Activated CD4-positive, alpha-beta T cell treated with anti-CD3 and anti-CD28 coated beads for 36 hours (primary cell): ENCODE measurements at regions of chr11 and their contacts with region 1.

Region 1: DNA sequence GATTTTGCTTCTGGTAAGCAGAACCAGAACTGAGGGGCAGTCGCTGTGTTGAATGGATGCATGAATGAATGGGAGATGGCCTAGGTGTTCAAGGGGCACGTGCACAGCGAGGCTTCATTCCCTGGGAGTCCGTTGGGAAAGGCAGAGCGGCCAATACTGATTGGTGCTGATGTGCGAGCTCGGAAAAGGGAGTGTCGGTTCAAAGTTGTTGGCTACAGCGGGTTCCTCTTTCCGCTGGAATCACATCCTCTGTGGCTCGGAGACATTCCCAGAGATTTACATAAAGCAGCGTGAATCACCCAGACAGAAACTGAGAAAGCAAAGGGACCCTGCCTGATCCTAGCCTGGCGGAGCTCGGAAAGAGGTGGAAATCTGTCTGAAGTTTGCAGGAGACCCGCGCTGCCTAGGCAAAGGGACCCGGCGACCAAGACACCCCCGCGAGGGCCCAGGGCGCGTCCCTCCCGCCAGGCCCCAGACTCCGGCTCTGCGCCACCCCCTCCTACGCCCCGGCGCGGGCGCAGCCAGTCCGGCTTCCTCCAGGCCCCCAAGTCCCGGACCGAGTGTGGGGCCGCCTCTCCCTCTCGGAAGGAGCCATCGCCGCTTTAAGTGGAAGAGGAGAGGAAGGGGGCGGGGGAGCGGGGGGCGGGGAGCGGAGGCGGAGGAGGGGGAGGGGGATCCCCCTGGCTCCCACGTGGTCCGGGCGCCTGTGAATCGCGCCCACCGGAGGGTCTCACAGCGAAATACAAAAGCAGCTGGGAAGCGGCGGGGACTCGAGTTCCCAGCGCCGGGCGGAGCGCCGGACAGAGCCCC is at the start of gene FJX1:
- DNase-seq: peak; percentile 37
- ATAC-seq: peak; percentile 15
- H3K4me3 Mint-ChIP-seq: peak within 1 kb of the TSS; percentile 55
- H3K27ac Mint-ChIP-seq: no peak within 1 kb of the TSS
- H3K4me1 Mint-ChIP-seq: peaks cover 11% of the 10 kb centered on the region
- H3K27me3 Mint-ChIP-seq: peaks cover 51% of the 10 kb centered on the region
- total RNA-seq, gene FJX1: 0.69 to 0.74 TPM

Region 2: DNA sequence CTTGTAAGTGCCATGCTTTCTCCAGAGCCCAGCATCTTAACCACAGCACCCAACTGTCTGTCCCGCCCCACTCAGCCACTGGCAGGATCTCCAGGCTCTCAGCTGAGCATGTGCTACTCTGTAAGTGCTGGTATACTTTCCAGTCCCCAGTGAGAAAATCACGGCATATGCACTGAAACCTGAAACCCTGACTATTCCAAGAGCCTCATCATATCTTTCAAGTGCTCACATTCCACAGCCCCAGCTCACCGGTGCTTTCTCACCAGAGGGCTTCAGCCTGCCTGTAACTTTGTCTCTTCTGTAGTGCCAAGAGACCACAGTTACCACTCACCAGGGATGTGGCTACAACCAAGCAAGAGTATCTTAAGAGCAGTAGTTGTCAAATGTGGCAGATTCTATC is 68.1 kb before region 1 on chr11:
- CTCF ChIA-PET with region 1: no interaction called
- POLR2A ChIA-PET with region 1: no interaction called
- intact Hi-C with region 1: no loop called
- DNase-seq: no peak
- ATAC-seq: no peak
- H3K4me3 Mint-ChIP-seq: no peak overlapping the region
- H3K27ac Mint-ChIP-seq: no peak overlapping the region
- H3K4me1 Mint-ChIP-seq: no peaks in the 10 kb centered on the region
- H3K27me3 Mint-ChIP-seq: peaks cover 14% of the 10 kb centered on the region

Region 3: GRCh38 chr11:35662649-35663407 is 44.9 kb after region 1 on chr11 and contains the start of gene TRIM44:
- CTCF ChIA-PET with region 1: no interaction called
- POLR2A ChIA-PET with region 1: no interaction called
- intact Hi-C with region 1: loop called (anchors 1 to 2 kb)
- DNase-seq: peak; percentile 92
- ATAC-seq: peak; percentile 86
- H3K4me3 Mint-ChIP-seq: peak within 1 kb of the TSS; percentile 83
- H3K27ac Mint-ChIP-seq: peak within 1 kb of the TSS; percentile 97
- H3K4me1 Mint-ChIP-seq: peaks cover 41% of the 10 kb centered on the region
- H3K27me3 Mint-ChIP-seq: peaks cover under 1% of the 10 kb centered on the region
- total RNA-seq, gene TRIM44: 38.1 to 39.9 TPM

Region 4: GRCh38 chr11:35943713-35944655 is 326.1 kb after region 1 on chr11 and contains the start of gene LDLRAD3:
- CTCF ChIA-PET with region 1: no interaction called
- POLR2A ChIA-PET with region 1: no interaction called
- intact Hi-C with region 1: loop called in 1 of 2 experiments (anchors 5 kb)
- DNase-seq: peak; percentile 67
- ATAC-seq: peak; percentile 87
- H3K4me3 Mint-ChIP-seq: peak within 1 kb of the TSS; percentile 68
- H3K27ac Mint-ChIP-seq: no peak within 1 kb of the TSS
- H3K4me1 Mint-ChIP-seq: peaks cover 3% of the 10 kb centered on the region
- H3K27me3 Mint-ChIP-seq: peaks cover 46% of the 10 kb centered on the region
- total RNA-seq, gene LDLRAD3: 0.46 to 0.47 TPM

Region 5: GRCh38 chr11:36131721-36132397 is 514.0 kb after region 1 on chr11:
- CTCF ChIA-PET with region 1: no interaction called
- POLR2A ChIA-PET with region 1: no interaction called
- intact Hi-C with region 1: loop called in 1 of 2 experiments (anchors 1 kb)
- DNase-seq: peak; percentile 17
- ATAC-seq: no peak
- H3K4me3 Mint-ChIP-seq: no peak overlapping the region
- H3K27ac Mint-ChIP-seq: no peak overlapping the region
- H3K4me1 Mint-ChIP-seq: no peaks in the 10 kb centered on the region
- H3K27me3 Mint-ChIP-seq: peaks cover 8% of the 10 kb centered on the region

Region 6: DNA sequence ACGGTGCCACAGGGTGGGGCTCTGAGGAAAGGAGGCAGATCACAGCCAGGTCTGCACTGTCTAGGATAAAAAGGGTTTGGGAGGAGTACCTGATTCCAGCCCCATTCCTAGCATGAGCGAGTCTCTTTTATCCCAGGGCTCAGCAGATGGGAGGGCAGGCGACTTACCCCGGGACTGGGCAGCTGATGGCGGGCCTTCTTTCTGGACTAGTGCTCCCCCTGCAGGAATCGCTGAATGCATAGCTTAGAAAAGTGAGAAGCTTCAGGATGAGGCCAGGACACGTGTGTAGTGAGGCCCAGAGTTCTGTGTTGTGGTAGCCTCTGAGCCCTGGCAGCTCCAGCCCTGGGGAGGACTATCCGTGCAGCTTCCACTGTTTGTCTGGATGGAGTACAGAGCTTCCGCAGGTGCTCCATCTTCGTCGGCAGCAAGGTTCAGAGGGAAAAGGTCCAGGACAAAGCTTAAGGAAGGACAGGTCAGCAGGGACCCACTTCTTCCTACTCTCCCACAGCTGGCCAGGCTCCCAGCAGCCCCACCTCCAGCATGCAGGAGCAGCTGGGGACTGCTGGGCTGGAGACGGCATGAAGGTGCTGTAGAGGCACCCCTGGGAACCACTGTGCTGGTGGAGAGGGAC is 641.0 kb after region 1 on chr11:
- CTCF ChIA-PET with region 1: interaction called, 13 read pairs
- POLR2A ChIA-PET with region 1: no interaction called
- intact Hi-C with region 1: no loop called
- DNase-seq: peak; percentile 61
- ATAC-seq: peak; percentile 71
- H3K4me3 Mint-ChIP-seq: no peak overlapping the region
- H3K27ac Mint-ChIP-seq: no peak overlapping the region
- H3K4me1 Mint-ChIP-seq: no peaks in the 10 kb centered on the region
- H3K27me3 Mint-ChIP-seq: peaks cover 21% of the 10 kb centered on the region

Region 7: DNA sequence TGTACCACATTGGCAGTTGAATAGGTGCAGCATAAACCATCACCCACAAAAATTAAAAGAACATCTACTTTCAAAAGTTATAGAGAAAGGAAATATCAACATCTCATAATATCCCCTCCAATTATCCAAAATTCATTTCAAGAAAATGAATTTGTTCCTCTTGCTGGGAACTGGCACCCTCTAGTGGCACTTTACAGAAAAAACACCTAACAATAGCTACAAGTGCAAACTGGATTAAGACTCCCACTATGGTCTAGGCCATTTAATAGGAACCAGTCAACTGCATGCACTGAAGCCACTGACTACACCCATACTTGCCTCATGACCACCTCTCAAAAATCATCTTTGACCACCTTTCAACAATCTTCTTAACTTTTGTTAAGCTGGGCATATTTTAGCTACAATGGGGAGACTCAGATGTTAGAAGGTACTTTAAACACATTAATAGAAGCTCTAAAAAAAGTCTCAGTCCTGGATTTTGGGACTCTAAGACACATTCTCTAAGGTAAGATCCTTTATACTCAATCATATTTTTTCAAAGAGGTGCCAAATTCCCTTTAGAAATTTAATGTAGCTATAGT is 874.9 kb after region 1 on chr11:
- CTCF ChIA-PET with region 1: interaction called, 3 read pairs
- POLR2A ChIA-PET with region 1: no interaction called
- intact Hi-C with region 1: loop called in 1 of 2 experiments (anchors 5 kb)
- DNase-seq: peak; percentile 41
- ATAC-seq: peak; percentile 74
- H3K4me3 Mint-ChIP-seq: no peak overlapping the region
- H3K27ac Mint-ChIP-seq: peak overlapping the region; percentile 24
- H3K4me1 Mint-ChIP-seq: peaks cover 23% of the 10 kb centered on the region
- H3K27me3 Mint-ChIP-seq: no peaks in the 10 kb centered on the region